Brain microvascular endothelial cell (primary cell): ENCODE measurements at regions of chr7 and their contacts with region 1.

Region 1: DNA sequence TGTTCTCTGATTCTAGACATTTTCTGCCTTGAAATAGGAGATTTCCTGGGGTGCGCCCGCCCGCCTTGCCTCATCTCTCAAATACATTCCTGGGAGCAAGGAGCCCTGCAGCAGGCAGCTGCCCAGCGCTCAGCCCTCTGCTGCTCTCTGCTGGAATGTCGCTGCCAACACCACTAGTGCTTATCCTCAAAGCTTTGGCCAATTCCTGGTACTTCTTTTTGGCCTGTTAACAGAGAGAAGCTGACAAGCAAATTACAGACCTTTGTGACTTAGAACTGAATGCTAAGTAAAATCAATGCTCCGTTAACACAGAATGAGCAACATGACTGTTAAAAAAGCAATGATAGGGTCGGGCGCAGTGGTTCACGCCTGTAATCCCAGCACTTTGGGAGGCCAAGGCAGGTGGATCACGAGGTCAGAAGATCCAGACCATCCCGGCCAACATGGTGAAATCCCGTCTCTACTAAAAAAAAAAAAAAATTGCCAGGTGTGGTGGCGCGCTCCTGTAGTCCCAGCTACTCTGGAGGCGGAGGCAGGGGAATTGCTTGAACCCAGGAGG is 41.9 kb upstream of the SYPL1 start:
- DNase-seq: peak; percentile 70
- H3K4me3 ChIP-seq: no peak overlapping the region
- H3K27ac ChIP-seq: no peak overlapping the region
- H3K27me3 ChIP-seq: no peaks in the 10 kb centered on the region
- CTCF ChIP-seq: peak; percentile 97

Region 2: GRCh38 chr7:106056513-106057203 is 97.3 kb before region 1 on chr7:
- in situ Hi-C with region 1: loop called (anchors 25 kb)
- DNase-seq: peak; percentile 53
- H3K4me3 ChIP-seq: no peak overlapping the region
- H3K27ac ChIP-seq: no peak overlapping the region
- H3K27me3 ChIP-seq: no peaks in the 10 kb centered on the region
- CTCF ChIP-seq: peak; percentile 95